ENCODE measurements at regions of chr1 and their contacts with region 1.

Region 1: DNA sequence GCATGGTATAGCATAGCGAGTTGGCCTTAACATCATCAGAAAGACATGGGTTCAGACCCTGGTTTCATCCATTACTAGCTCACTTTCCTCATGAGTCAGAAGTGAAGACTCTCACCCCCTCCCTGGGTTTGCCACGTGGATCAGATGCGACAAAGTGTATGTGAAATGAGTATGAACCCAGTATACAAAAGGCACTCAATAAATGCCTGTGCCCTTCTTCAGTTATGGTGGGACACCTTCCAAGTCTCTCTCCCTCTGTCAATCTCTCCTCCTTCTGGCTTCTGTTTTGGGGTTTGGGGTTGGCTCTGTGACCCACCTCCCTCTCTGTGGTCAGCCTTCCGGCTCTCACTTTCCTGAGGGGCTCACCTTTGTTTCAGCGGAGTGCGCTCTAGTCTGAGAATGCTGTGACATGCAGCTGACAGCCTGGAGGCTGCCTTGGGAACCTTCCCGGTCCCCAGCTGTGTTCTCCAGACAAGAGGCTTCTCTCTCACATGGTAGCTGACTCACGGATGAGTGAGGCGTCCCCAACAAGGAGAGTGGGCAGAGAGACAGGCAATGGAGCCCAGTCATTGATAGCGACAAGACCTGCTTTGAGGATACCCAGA is 155.0 kb upstream of the EDN2 start:
- DNase-seq: peak; percentile 84
- ATAC-seq: peak; percentile 83
- H3K4me3 Mint-ChIP-seq: peak overlapping the region; percentile 62
- H3K27ac Mint-ChIP-seq: no peak overlapping the region
- H3K4me1 Mint-ChIP-seq: peaks cover 13% of the 10 kb centered on the region
- H3K27me3 Mint-ChIP-seq: no peaks in the 10 kb centered on the region

Region 2: GRCh38 chr1:41626616-41627375 is 12.6 kb before region 1 on chr1:
- CTCF ChIA-PET with region 1: no interaction called
- POLR2A ChIA-PET with region 1: no interaction called
- intact Hi-C with region 1: loop called (anchors 1 kb)
- DNase-seq: peak; percentile 88
- ATAC-seq: peak; percentile 98
- H3K4me3 Mint-ChIP-seq: no peak overlapping the region
- H3K27ac Mint-ChIP-seq: peak overlapping the region; percentile 82
- H3K4me1 Mint-ChIP-seq: peaks cover 84% of the 10 kb centered on the region
- H3K27me3 Mint-ChIP-seq: no peaks in the 10 kb centered on the region

Region 3: DNA sequence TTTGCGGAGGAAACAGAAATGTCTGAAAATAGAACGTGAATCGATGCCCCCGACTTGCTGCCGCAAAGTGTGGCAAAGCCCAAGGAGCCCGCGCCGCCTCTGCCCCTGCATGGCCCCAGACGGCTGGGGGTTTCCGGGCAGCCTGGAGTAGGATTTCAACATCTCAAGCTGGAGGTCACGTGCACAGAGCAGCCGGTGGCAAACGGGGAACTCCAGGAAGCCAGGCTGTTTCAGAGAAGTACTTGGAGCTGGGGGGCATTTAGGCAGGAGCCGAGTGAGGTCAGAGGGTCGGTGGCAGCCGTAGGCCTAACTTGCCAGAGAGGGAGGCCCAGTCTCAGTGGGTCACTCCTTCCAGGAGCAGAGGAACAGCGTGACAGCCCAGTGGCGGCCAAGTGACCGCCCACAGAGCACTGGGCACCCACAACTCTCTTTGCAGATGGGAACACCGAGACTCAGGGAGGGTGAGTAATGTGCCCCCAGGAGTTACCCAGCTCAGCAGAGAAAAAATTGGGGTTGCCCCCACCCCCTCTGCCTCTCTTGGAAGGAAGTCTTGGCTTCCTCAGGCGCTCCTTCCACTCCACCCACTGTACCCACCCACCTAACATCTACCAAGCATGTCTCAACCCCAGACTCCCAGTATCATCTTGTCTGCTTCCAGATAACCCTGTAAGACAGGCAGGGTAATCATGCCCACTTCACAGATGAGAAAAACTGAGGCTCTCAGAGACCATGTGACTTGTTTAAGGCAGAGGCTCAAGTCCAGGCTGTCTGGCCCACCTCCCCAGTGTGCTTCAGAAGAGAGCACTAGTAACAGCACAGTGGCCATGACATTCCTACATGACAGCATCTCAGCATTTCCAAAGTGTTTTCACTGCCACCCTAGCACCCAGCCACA is 99.9 kb after region 1 on chr1:
- CTCF ChIA-PET with region 1: no interaction called
- POLR2A ChIA-PET with region 1: interaction called, 5 read pairs
- intact Hi-C with region 1: loop called in 1 of 2 experiments (anchors 1 kb)
- DNase-seq: peak; percentile 95
- ATAC-seq: peak; percentile 50
- H3K4me3 Mint-ChIP-seq: peak overlapping the region; percentile 58
- H3K27ac Mint-ChIP-seq: peak overlapping the region; percentile 91
- H3K4me1 Mint-ChIP-seq: peaks cover 92% of the 10 kb centered on the region
- H3K27me3 Mint-ChIP-seq: no peaks in the 10 kb centered on the region

Region 4: DNA sequence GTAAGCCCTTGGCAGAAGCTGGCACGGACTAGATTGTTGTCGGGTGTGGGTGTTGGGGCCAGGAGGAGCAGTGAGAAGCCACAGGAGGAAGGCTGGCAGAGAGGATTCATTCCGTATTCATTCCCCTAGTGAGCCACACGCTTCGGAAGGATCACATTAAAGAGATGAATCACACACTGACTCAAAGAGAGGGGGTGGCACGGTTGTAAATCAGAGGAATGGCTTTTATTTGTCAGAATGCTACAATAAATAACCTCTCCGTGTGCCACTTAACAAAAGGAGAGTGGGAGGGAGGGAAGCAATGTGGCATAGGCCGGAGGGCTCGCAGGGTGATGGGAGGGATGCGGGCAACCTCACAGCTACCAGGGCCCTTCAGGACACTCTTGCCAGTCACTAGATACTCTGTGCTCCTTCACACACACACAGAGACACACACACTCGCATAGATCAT is 143.8 kb after region 1 on chr1:
- CTCF ChIA-PET with region 1: no interaction called
- POLR2A ChIA-PET with region 1: interaction called, 4 read pairs
- intact Hi-C with region 1: loop called in 1 of 2 experiments (anchors 1 kb)
- DNase-seq: peak; percentile 78
- ATAC-seq: peak; percentile 98
- H3K4me3 Mint-ChIP-seq: peak overlapping the region; percentile 64
- H3K27ac Mint-ChIP-seq: peak overlapping the region; percentile 86
- H3K4me1 Mint-ChIP-seq: peaks cover 35% of the 10 kb centered on the region
- H3K27me3 Mint-ChIP-seq: no peaks in the 10 kb centered on the region

Region 5: DNA sequence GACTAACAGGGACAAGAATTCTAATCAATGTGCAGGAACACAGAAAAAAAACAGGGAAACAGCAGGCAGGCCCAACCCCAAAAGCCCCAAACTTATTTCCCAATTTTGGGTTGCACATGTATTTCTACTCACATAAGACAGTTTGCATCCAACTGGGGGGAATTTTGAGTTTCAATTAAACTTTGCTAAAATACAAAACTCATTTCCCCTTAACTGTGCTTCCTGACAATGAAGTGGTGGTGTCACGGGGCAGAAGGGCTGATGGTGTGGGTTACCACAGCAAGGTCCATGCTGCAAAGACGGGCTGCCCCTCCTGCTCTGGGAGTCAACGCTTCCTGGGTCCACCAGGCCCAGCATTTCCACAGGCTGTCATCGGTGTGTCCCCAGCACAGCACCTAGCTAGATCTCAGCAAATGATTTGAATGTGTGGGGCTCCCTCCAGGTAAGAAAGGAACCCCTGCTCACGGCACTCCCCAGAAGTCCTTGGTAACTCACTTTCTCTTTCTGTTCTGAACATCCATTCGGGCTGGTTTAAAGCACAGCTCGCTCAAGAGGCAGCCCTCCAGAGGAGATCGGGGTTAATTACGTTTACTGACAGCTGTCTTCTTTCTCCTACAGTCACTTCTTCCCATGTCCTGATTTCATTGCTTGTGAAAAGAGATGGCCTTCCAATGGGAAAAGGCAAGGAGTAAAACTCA is 251.9 kb after region 1 on chr1:
- CTCF ChIA-PET with region 1: no interaction called
- POLR2A ChIA-PET with region 1: no interaction called
- intact Hi-C with region 1: loop called in 1 of 2 experiments (anchors 10 kb)
- DNase-seq: peak; percentile 72
- ATAC-seq: peak; percentile 96
- H3K4me3 Mint-ChIP-seq: peak overlapping the region; percentile 78
- H3K27ac Mint-ChIP-seq: peak overlapping the region; percentile 95
- H3K4me1 Mint-ChIP-seq: peaks cover 50% of the 10 kb centered on the region
- H3K27me3 Mint-ChIP-seq: no peaks in the 10 kb centered on the region